ENCODE measurements at regions of chr3 and their contacts with region 1.

Region 1: GRCh38 chr3:128584412-128585020 is 66.1 kb downstream of the RPN1 start:
- H3K4me3 Mint-ChIP-seq: no peak overlapping the region
- H3K27ac Mint-ChIP-seq: no peak overlapping the region
- H3K4me1 Mint-ChIP-seq: peaks cover 9% of the 10 kb centered on the region
- H3K27me3 Mint-ChIP-seq: peaks cover 5% of the 10 kb centered on the region

Region 2: GRCh38 chr3:128170805-128171516 is 413.6 kb before region 1 on chr3:
- intact Hi-C with region 1: loop called (anchors 10 kb)
- H3K4me3 Mint-ChIP-seq: no peak overlapping the region
- H3K27ac Mint-ChIP-seq: peak overlapping the region; percentile 34
- H3K4me1 Mint-ChIP-seq: peaks cover 53% of the 10 kb centered on the region
- H3K27me3 Mint-ChIP-seq: no peaks in the 10 kb centered on the region

Region 3: GRCh38 chr3:128426128-128426921 is 158.2 kb before region 1 on chr3:
- intact Hi-C with region 1: loop called (anchors 1 kb)
- H3K4me3 Mint-ChIP-seq: peak overlapping the region; percentile 43
- H3K27ac Mint-ChIP-seq: no peak overlapping the region
- H3K4me1 Mint-ChIP-seq: no peaks in the 10 kb centered on the region
- H3K27me3 Mint-ChIP-seq: peaks cover 32% of the 10 kb centered on the region

Region 4: DNA sequence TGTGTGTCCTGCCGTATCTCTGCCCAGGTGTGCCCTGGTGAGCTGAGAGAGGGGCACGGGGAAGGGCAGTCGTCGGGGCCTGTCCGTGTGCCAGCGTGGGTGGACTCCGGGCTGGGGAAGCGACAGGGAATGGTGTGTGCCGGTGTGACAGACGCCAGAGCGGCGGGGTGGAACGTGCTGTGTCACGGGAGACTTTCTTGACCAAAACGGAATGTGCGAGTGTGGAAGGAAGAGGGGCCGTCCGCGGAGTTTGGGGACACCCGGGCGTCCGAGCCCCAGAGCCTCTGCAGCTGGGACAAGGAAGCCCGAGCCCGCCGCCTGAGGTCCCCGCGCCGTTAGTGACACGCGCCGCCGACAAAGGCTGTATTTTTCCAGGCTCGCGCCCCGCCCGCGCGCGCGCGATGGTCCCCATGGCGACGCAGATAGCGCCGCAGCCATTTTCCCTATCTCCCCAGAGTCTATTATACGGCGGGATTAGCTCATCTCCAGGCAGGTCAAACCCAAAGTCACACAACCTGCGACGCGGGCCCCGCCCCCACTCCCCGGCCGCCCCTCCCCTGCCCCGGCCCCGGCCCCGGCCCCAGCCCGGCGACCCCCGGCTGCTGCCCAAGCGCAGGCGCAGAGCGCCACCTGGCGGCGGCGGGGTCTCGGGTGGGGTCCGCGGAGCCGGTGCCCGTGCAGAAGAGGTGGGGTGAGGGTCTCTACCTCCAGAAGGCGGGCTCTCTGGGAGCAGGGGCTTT is 87.0 kb before region 1 on chr3:
- intact Hi-C with region 1: loop called (anchors 10 kb)
- H3K4me3 Mint-ChIP-seq: peak overlapping the region; percentile 67
- H3K27ac Mint-ChIP-seq: no peak overlapping the region
- H3K4me1 Mint-ChIP-seq: peaks cover 20% of the 10 kb centered on the region
- H3K27me3 Mint-ChIP-seq: peaks cover 64% of the 10 kb centered on the region

Region 5: DNA sequence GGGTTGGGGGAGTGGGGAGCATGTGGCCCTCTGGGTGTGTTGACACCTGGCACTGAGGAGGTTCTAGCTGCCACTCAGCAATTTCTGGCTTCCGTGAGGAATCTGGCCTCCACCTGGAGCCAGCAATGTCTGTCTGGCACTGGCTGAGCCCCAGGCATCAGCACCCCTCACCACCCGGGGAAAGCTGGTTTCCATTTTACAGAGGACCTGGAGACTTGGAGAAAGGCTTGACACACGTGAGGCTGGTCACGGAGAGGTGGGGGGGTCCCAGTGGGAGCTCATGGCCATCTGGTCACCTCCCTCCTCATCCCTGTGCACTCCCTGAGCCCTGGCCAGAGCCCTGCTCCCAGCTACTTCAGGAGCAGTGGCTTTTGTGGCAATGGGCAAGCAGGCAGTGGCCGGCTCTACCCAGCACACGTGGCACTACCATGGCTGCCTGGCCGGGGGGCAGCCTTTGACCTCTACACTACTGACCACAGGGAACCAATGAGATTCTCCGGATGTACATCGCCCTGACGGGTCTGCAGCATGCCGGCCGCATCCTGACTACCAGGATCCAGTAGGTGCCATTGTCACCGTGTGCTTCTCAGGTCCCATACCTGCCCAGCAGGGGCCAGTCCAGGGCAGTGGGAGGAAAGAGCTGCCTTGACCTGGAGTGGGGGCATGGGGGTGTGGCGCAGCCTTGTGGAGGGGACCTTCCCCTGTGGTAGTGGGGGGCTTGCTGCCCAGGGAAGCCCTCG is 323.4 kb after region 1 on chr3:
- intact Hi-C with region 1: no loop called
- H3K4me3 Mint-ChIP-seq: no peak overlapping the region
- H3K27ac Mint-ChIP-seq: no peak overlapping the region
- H3K4me1 Mint-ChIP-seq: no peaks in the 10 kb centered on the region
- H3K27me3 Mint-ChIP-seq: no peaks in the 10 kb centered on the region

Region 6: GRCh38 chr3:129058441-129059200 is 474.1 kb after region 1 on chr3:
- intact Hi-C with region 1: no loop called
- H3K4me3 Mint-ChIP-seq: no peak overlapping the region
- H3K27ac Mint-ChIP-seq: no peak overlapping the region
- H3K4me1 Mint-ChIP-seq: peaks cover 5% of the 10 kb centered on the region
- H3K27me3 Mint-ChIP-seq: peaks cover 4% of the 10 kb centered on the region